Tibial artery (tissue), 4 donors: ENCODE measurements at regions of chr3 and their contacts with region 1.

Region 1: DNA sequence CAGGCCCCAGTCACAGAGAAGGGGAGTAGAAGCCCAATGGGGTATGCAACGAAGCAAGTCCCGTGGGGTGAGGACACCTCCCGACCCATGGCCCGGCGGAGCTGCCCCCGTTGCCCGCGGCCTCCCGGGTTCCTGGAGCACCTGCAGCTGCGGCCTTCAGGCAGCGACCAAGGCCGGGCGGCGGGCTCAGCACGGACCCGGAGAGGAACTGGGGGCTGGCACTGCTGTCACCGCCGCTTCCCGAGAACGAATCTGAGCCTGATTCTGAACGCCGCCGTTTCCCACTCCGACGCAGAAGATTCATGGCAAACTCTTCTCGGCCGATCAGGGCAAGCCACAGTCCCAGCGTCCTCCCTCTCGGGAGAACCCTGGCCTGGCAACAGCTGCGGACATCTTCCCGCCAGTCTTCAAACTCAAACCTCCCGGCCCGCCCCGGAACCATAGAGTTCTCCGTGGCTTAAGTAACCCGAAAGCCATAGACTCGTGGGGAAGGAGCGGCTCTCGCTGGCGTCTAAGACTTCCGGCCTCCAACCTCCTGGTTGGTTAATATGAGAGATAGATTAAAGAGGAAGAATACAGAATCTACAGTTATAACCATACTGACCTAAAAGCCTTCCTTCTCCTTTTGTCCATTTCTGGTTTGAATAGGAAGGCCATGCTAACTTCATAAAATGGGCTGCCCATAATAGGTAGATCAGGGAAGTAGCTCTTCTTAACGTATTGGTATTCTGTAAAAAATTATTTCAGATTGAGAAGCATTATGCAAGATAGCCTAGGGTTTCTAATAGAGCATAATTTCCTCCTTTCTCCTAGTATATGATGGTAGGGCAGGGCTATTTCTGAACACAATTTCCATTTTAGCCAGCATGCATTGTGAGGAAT is at the start of gene POLQ:
- DNase-seq: peak; percentile 89 to 91
- H3K4me3 ChIP-seq: peak within 1 kb of the TSS; percentile 52 to 70
- H3K27ac ChIP-seq: peak within 1 kb of the TSS; percentile 63 to 78
- H3K4me1 ChIP-seq: peaks cover 0 to 12% (median 8%) of the 10 kb centered on the region in 4 donors
- H3K27me3 ChIP-seq: no peaks in the 10 kb centered on the region
- CTCF ChIP-seq: no peak

Region 2: GRCh38 chr3:121707531-121708273 is 161.9 kb after region 1 on chr3:
- intact Hi-C with region 1: no loop called
- DNase-seq: no peak
- H3K4me3 ChIP-seq: no peak overlapping the region
- H3K27ac ChIP-seq: no peak overlapping the region
- H3K4me1 ChIP-seq: no peaks in the 10 kb centered on the region
- H3K27me3 ChIP-seq: no peaks in the 10 kb centered on the region
- CTCF ChIP-seq: no peak

Region 3: GRCh38 chr3:121834696-121835464 is 289.1 kb after region 1 on chr3 and contains the starts of genes EAF2 and IQCB1:
- intact Hi-C with region 1: loop called (anchors 5 kb)
- DNase-seq: peak; percentile 96 to 97
- H3K4me3 ChIP-seq: peak within 1 kb of the TSS; percentile 72 to 85
- H3K27ac ChIP-seq: peak within 1 kb of the TSS; percentile 85 to 86
- H3K4me1 ChIP-seq: peaks cover 0 to 25% (median 14%) of the 10 kb centered on the region in 4 donors
- H3K27me3 ChIP-seq: no peaks in the 10 kb centered on the region
- CTCF ChIP-seq: no peak

Region 4: DNA sequence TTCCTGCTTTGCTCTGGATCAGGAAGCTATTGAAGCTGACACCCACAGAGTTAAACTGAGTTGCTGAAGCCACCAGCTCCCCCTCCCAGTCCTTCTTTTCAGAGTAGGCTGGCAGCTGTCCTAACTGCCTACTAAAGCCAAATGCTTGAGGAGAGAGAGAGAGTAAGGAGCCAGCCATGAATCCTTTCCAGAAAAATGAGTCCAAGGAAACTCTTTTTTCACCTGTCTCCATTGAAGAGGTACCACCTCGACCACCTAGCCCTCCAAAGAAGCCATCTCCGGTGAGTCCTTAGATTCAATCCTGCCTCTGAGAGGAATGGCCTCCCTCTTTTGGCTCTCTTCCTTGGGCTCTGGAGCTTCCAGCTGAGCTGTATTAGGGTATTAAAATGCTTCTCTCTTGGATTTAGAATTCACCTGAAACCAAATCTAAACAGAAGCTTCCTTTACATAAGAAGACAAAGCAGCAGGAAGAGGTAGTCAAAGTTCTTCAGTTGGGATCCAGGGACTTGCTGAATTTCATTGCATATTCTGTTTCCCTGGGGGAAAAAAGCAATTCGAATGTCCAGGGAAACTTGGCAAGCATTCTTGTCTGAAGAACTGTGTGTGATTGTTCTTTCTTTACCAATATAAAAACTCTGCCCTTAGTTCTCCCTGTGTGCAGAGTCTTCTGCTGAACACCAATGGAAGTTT is 348.6 kb after region 1 on chr3 and contains the start of gene SLC15A2:
- intact Hi-C with region 1: no loop called
- DNase-seq: peak in 1 of 2 donors; percentile 20
- H3K4me3 ChIP-seq: no peak within 1 kb of the TSS
- H3K27ac ChIP-seq: no peak within 1 kb of the TSS
- H3K4me1 ChIP-seq: peaks cover 0 to 14% (median 6%) of the 10 kb centered on the region in 4 donors
- H3K27me3 ChIP-seq: no peaks in the 10 kb centered on the region
- CTCF ChIP-seq: no peak